Naive thymus-derived CD4-positive, alpha-beta T cell (primary cell): ENCODE measurements at regions of chr1 and their contacts with region 1.

Region 1: DNA sequence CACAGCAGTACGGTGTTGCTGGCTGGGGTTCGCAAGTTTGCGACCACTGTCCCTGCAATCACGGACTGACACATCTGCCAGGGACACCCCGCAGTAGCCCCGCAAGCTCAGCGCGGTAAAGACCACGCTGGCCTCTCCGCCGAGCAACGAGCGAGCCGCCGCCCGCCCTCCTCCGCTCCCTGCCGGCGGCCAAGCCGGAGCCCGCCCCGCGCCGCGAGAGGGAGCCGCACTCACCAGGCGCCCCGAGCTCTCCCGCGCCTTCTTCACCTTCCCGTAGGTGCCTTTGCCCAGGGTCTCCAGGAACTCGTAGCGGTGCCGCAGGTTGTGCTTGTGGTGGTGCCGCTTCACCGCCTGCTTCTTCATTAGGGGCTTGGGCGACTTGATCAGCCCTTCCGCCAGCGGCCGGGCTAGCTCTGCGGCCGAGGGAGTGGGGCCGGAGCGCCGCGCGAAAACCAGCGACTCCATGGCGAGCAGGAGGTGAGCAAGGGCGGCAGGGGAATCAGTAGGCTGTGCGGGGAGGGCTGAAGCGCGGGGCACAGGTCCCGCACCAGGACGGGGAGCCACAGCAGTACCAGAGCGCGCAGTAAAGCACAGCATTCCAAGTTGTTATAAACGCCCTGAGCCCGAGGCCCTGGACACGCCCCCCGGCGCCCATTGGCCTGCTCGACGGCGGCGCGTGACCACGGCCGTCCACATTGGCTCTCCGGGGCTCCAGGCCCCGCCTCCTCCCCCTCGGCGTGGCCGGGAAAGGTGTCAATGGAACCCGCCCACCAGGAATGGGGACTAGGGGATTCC is at the start of gene NUAK2:
- DNase-seq: peak; percentile 78 to 87 (median 84)
- ATAC-seq: peak; percentile 94
- H3K4me3 ChIP-seq: peak within 1 kb of the TSS; percentile 95
- H3K4me3 Mint-ChIP-seq: peak within 1 kb of the TSS; percentile 91 to 100 (median 98)
- H3K27ac ChIP-seq: peak within 1 kb of the TSS; percentile 89
- H3K27ac Mint-ChIP-seq: peak within 1 kb of the TSS; percentile 86 to 99 (median 94)
- H3K4me1 ChIP-seq: peaks cover 42 to 49% of the 10 kb centered on the region in 2 donors
- H3K4me1 Mint-ChIP-seq: peaks cover 42 to 69% (median 64%) of the 10 kb centered on the region in 7 donors
- H3K27me3 ChIP-seq: no peaks in the 10 kb centered on the region
- H3K27me3 Mint-ChIP-seq: peaks cover 0 to 21% (median 0%) of the 10 kb centered on the region in 5 donors
- total RNA-seq, gene NUAK2: 9.1 to 57.8 (median 23.0) TPM

Region 2: GRCh38 chr1:204438628-204439027 is 882.7 kb before region 1 on chr1:
- CTCF ChIA-PET with region 1: no interaction called
- POLR2A ChIA-PET with region 1: no interaction called
- intact Hi-C with region 1: no loop called
- DNase-seq: no peak
- ATAC-seq: no peak
- H3K4me3 ChIP-seq: no peak overlapping the region
- H3K4me3 Mint-ChIP-seq: no peak overlapping the region
- H3K27ac ChIP-seq: no peak overlapping the region
- H3K27ac Mint-ChIP-seq: peak overlapping the region in 3 of 9 donors; percentile 2 to 25 (median 2)
- H3K4me1 ChIP-seq: no peaks in the 10 kb centered on the region
- H3K4me1 Mint-ChIP-seq: peaks cover 0 to 1% (median 0%) of the 10 kb centered on the region in 7 donors
- H3K27me3 ChIP-seq: no peaks in the 10 kb centered on the region
- H3K27me3 Mint-ChIP-seq: no peaks in the 10 kb centered on the region

Region 3: DNA sequence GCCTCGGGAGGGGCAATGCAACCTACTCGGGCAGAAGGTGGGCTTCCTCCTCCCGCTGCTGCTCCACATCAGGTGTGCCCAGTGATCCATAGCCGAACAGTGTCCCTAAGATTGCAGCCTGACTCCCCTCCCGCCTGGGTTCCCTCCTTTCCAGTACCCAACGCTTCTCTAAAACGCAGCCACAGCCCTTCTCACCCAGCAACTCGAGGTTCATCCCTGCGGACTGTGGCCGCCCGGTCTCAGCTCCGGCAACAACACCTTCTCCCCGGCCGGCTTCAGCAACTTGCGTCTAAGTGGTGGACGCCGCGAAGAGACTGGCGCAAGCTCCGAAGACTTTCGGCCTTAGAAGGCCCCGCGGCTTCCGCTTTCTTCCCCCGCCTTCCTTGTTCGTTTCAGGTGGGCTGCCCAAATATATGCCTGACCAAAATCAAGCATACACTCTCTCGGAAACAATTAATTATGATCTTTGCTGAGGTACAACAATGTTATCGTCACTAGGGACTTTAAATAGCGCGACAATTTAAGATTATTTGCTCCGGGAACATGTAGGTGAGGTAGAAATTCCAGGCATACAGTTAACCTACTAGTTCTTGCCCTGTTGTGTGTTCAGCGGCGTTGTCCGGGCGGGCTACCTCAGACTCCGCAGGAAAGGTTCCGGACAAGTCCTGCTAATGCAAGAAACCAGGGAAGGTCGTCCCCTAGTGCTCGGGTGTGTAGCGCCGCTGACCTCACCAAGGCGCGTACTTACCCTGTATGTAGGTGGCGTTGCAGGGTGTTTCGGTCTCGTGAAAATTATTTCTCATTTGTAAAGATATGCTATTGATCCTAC is 199.5 kb before region 1 on chr1 and contains the start of gene RBBP5:
- CTCF ChIA-PET with region 1: no interaction called
- POLR2A ChIA-PET with region 1: no interaction called
- intact Hi-C with region 1: loop called in 1 of 2 experiments (anchors 5 kb)
- DNase-seq: peak; percentile 87 to 97 (median 93)
- ATAC-seq: peak; percentile 98
- H3K4me3 ChIP-seq: peak within 1 kb of the TSS; percentile 89
- H3K4me3 Mint-ChIP-seq: peak within 1 kb of the TSS; percentile 89 to 99 (median 96)
- H3K27ac ChIP-seq: peak within 1 kb of the TSS; percentile 86
- H3K27ac Mint-ChIP-seq: peak within 1 kb of the TSS; percentile 98 to 100 (median 99)
- H3K4me1 ChIP-seq: peaks cover 18 to 24% of the 10 kb centered on the region in 2 donors
- H3K4me1 Mint-ChIP-seq: peaks cover 30 to 56% (median 51%) of the 10 kb centered on the region in 7 donors
- H3K27me3 ChIP-seq: no peaks in the 10 kb centered on the region
- H3K27me3 Mint-ChIP-seq: no peaks in the 10 kb centered on the region
- total RNA-seq, gene RBBP5: 11.0 to 31.5 (median 21.0) TPM

Region 4: DNA sequence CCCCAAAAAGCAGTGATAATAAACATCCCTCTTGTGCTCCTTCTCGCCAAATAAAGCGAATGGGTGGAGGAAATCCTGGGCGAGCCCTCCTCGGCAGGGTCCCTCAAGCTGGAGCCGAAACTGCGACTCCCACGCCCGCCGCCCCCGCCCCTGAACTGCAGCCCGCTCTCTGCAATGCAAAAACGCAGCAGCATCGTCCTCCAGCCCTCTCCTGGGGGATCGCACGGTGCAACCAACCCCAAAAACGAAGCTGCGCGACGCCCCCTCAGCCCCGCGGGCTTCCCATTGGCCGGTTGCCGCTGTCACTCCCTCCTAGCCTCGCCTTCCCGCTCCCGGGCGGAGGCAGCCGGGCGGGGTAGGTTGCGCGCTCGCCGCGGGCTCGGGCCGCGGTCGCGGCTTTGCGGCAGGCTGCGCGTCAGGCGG is 93.8 kb before region 1 on chr1 and contains the start of gene TMCC2:
- CTCF ChIA-PET with region 1: interaction called, 16 read pairs
- POLR2A ChIA-PET with region 1: interaction called, 4 read pairs
- intact Hi-C with region 1: loop called (anchors 5 kb)
- DNase-seq: peak; percentile 57 to 87 (median 73)
- ATAC-seq: peak; percentile 86
- H3K4me3 ChIP-seq: peak within 1 kb of the TSS; percentile 75
- H3K4me3 Mint-ChIP-seq: peak within 1 kb of the TSS; percentile 86 to 99 (median 94)
- H3K27ac ChIP-seq: peak within 1 kb of the TSS; percentile 1
- H3K27ac Mint-ChIP-seq: peak within 1 kb of the TSS; percentile 43 to 90 (median 82)
- H3K4me1 ChIP-seq: peaks cover 10 to 13% of the 10 kb centered on the region in 2 donors
- H3K4me1 Mint-ChIP-seq: peaks cover 12 to 51% (median 18%) of the 10 kb centered on the region in 7 donors
- H3K27me3 ChIP-seq: no peaks in the 10 kb centered on the region
- H3K27me3 Mint-ChIP-seq: peaks cover 0 to 44% (median 4%) of the 10 kb centered on the region in 5 donors
- total RNA-seq, gene TMCC2: 1.1 to 3.6 (median 1.8) TPM

Region 5: GRCh38 chr1:205240118-205240517 is 81.2 kb before region 1 on chr1:
- CTCF ChIA-PET with region 1: no interaction called
- POLR2A ChIA-PET with region 1: no interaction called
- intact Hi-C with region 1: no loop called
- DNase-seq: no peak
- ATAC-seq: no peak
- H3K4me3 ChIP-seq: no peak overlapping the region
- H3K4me3 Mint-ChIP-seq: no peak overlapping the region
- H3K27ac ChIP-seq: no peak overlapping the region
- H3K27ac Mint-ChIP-seq: no peak overlapping the region
- H3K4me1 ChIP-seq: no peaks in the 10 kb centered on the region
- H3K4me1 Mint-ChIP-seq: peaks cover 3 to 19% (median 12%) of the 10 kb centered on the region in 7 donors
- H3K27me3 ChIP-seq: no peaks in the 10 kb centered on the region
- H3K27me3 Mint-ChIP-seq: peaks cover 0 to 9% (median 0%) of the 10 kb centered on the region in 5 donors

Region 6: DNA sequence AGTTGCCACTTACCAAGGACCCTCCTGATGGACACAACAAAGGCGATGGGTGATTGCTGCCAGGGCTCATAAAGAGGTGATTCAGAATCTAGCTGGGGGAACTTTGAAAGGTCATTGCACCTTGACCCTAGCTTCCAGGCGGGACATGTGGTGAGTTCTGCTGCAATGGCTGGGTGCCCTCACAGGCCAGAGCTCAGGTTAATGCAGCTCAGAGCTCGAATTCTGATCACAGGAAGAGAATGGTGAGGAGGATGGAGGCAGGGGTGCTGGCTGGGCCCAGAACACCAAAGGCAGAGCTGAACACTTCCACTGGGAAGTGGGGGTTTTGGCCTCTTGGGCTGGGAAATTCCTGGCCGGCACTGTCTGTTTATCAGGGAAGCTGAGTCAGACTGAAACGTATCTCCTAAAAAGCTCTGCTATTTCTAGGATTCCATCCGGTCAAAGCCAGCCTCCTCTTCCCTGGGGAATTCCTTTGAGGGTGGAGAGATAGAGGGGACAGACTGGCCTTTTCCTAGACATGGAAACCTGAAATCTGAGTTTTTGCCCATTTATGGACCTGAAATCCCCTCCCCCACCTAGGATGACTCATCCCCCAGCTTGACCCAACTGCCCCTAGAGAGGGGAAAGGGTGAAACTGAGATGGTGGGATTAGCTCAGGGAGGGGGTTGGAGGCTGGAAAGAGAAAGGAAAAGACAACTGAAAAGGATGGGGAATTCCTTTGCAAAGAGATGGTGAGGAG is 27.0 kb before region 1 on chr1:
- CTCF ChIA-PET with region 1: interaction called, 955 read pairs
- POLR2A ChIA-PET with region 1: interaction called, 1,119 read pairs
- intact Hi-C with region 1: no loop called
- DNase-seq: no peak
- ATAC-seq: no peak
- H3K4me3 ChIP-seq: no peak overlapping the region
- H3K4me3 Mint-ChIP-seq: peak overlapping the region in 4 of 10 donors; percentile 10 to 51 (median 30)
- H3K27ac ChIP-seq: no peak overlapping the region
- H3K27ac Mint-ChIP-seq: peak overlapping the region in 8 of 9 donors; percentile 42 to 96 (median 76)
- H3K4me1 ChIP-seq: peaks cover 12 to 41% of the 10 kb centered on the region in 2 donors
- H3K4me1 Mint-ChIP-seq: peaks cover 40 to 93% (median 84%) of the 10 kb centered on the region in 7 donors
- H3K27me3 ChIP-seq: no peaks in the 10 kb centered on the region
- H3K27me3 Mint-ChIP-seq: peaks cover 0 to 7% (median 0%) of the 10 kb centered on the region in 5 donors

Region 7: GRCh38 chr1:205335643-205336091 is 14.3 kb after region 1 on chr1:
- CTCF ChIA-PET with region 1: interaction called, 33 read pairs
- POLR2A ChIA-PET with region 1: interaction called, 3 read pairs
- intact Hi-C with region 1: no loop called
- DNase-seq: peak; percentile 55 to 81 (median 71)
- ATAC-seq: peak; percentile 96
- H3K4me3 ChIP-seq: no peak overlapping the region
- H3K4me3 Mint-ChIP-seq: no peak overlapping the region
- H3K27ac ChIP-seq: no peak overlapping the region
- H3K27ac Mint-ChIP-seq: no peak overlapping the region
- H3K4me1 ChIP-seq: no peaks in the 10 kb centered on the region
- H3K4me1 Mint-ChIP-seq: peaks cover 0 to 5% (median 0%) of the 10 kb centered on the region in 7 donors
- H3K27me3 ChIP-seq: no peaks in the 10 kb centered on the region
- H3K27me3 Mint-ChIP-seq: peaks cover 0 to 40% (median 0%) of the 10 kb centered on the region in 5 donors

Region 8: GRCh38 chr1:205485338-205486228 is 164.2 kb after region 1 on chr1:
- CTCF ChIA-PET with region 1: interaction called, 24 read pairs
- POLR2A ChIA-PET with region 1: no interaction called
- intact Hi-C with region 1: no loop called
- DNase-seq: peak; percentile 37 to 75 (median 64)
- ATAC-seq: peak; percentile 84
- H3K4me3 ChIP-seq: no peak overlapping the region
- H3K4me3 Mint-ChIP-seq: no peak overlapping the region
- H3K27ac ChIP-seq: no peak overlapping the region
- H3K27ac Mint-ChIP-seq: no peak overlapping the region
- H3K4me1 ChIP-seq: peaks cover 0 to 19% of the 10 kb centered on the region in 2 donors
- H3K4me1 Mint-ChIP-seq: peaks cover 2 to 30% (median 10%) of the 10 kb centered on the region in 7 donors
- H3K27me3 ChIP-seq: peaks cover 0 to 7% of the 10 kb centered on the region in 2 donors
- H3K27me3 Mint-ChIP-seq: peaks cover 42 to 63% (median 57%) of the 10 kb centered on the region in 5 donors